Heart right ventricle (tissue), 16 donors: ENCODE measurements at regions of chr4 and their contacts with region 1.

Region 1: GRCh38 chr4:55948726-55949474 is at the start of gene CEP135:
- DNase-seq: peak; percentile 94 to 96
- ATAC-seq: peak; percentile 97 to 99 (median 98)
- H3K4me3 ChIP-seq: peak within 1 kb of the TSS; percentile 61 to 92 (median 80)
- H3K27ac ChIP-seq: peak within 1 kb of the TSS; percentile 78 to 98 (median 93)
- H3K4me1 ChIP-seq: peaks cover 0 to 40% (median 16%) of the 10 kb centered on the region in 9 donors
- H3K27me3 ChIP-seq: no peaks in the 10 kb centered on the region
- CTCF ChIP-seq: peak in 8 of 9 donors; percentile 95 to 99 (median 97)
- total RNA-seq, gene CEP135: 2.1 to 4.0 (median 2.5) TPM

Region 2: DNA sequence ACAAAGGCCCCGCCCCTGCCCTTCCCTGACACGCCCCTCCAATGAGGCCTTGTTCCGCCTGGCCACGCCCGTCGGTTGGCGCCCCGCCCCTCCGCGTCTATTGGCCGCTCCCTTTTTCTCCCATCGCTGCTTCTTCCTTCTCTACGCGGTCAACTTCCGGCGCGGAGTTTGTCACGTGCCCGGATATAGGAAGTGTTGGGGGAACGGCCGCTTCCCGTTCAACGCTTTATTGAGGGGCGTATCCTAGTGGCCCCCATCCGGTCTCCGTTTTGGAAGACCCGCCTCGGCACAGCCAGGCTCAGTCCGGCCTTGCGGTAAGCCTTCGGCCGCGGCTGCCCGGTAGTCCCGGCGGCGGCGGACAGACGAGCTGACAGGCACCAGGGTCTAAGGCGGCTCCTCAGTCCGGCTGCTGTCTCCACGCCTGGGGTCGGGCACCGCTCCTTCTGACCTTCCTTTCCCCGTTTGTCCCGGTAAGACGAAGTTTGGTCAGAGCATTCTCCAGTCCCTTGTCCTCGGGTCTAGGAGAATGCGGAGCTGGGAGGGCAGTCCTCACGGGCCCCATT is 95.3 kb before region 1 on chr4 and contains the start of gene EXOC1:
- intact Hi-C with region 1: loop called in 1 of 10 experiments (anchors 1 kb)
- DNase-seq: peak; percentile 99
- ATAC-seq: peak; percentile 99 to 100 (median 100)
- H3K4me3 ChIP-seq: peak within 1 kb of the TSS; percentile 82 to 98 (median 95)
- H3K27ac ChIP-seq: peak within 1 kb of the TSS; percentile 72 to 95 (median 90)
- H3K4me1 ChIP-seq: peaks cover 0 to 28% (median 21%) of the 10 kb centered on the region in 9 donors
- H3K27me3 ChIP-seq: peaks cover 0 to 5% (median 0%) of the 10 kb centered on the region in 7 donors
- CTCF ChIP-seq: no peak
- total RNA-seq, gene EXOC1: 16.0 to 26.3 (median 21.5) TPM

Region 3: GRCh38 chr4:55871299-55871800 is 77.5 kb before region 1 on chr4:
- intact Hi-C with region 1: no loop called
- DNase-seq: no peak
- ATAC-seq: no peak
- H3K4me3 ChIP-seq: no peak overlapping the region
- H3K27ac ChIP-seq: no peak overlapping the region
- H3K4me1 ChIP-seq: peaks cover 0 to 16% (median 12%) of the 10 kb centered on the region in 9 donors
- H3K27me3 ChIP-seq: no peaks in the 10 kb centered on the region
- CTCF ChIP-seq: no peak

Region 4: GRCh38 chr4:55906999-55907398 is 41.9 kb before region 1 on chr4:
- intact Hi-C with region 1: loop called in 1 of 10 experiments (anchors 5 kb)
- DNase-seq: no peak
- ATAC-seq: peak in 3 of 8 donors; percentile 40 to 55 (median 55)
- H3K4me3 ChIP-seq: no peak overlapping the region
- H3K27ac ChIP-seq: peak overlapping the region in 3 of 10 donors; percentile 0 to 16 (median 10)
- H3K4me1 ChIP-seq: peaks cover 0 to 14% (median 0%) of the 10 kb centered on the region in 9 donors
- H3K27me3 ChIP-seq: no peaks in the 10 kb centered on the region
- CTCF ChIP-seq: no peak

Region 5: GRCh38 chr4:56301181-56302076 is 352.5 kb after region 1 on chr4:
- intact Hi-C with region 1: loop called (anchors 1 to 10 kb)
- DNase-seq: peak; percentile 59 to 77
- ATAC-seq: peak; percentile 87 to 94 (median 90)
- H3K4me3 ChIP-seq: peak overlapping the region in 1 of 10 donors; percentile 0
- H3K27ac ChIP-seq: no peak overlapping the region
- H3K4me1 ChIP-seq: peaks cover 0 to 12% (median 0%) of the 10 kb centered on the region in 9 donors
- H3K27me3 ChIP-seq: peaks cover 0 to 14% (median 0%) of the 10 kb centered on the region in 7 donors
- CTCF ChIP-seq: peak; percentile 59 to 90 (median 82)

Region 6: GRCh38 chr4:57078685-57079521 is 1130.0 kb after region 1 on chr4:
- intact Hi-C with region 1: no loop called
- DNase-seq: no peak
- ATAC-seq: peak in 5 of 8 donors; percentile 6 to 67 (median 52)
- H3K4me3 ChIP-seq: peak overlapping the region in 3 of 10 donors; percentile 5 to 16 (median 11)
- H3K27ac ChIP-seq: peak overlapping the region; percentile 21 to 100 (median 72)
- H3K4me1 ChIP-seq: peaks cover 14 to 100% (median 95%) of the 10 kb centered on the region in 9 donors
- H3K27me3 ChIP-seq: no peaks in the 10 kb centered on the region
- CTCF ChIP-seq: no peak